ENCODE measurements at regions of chr11 and their contacts with region 1.

Region 1: GRCh38 chr11:67630228-67630942 is 648 bp upstream of the NUDT8 start:
- DNase-seq: peak; percentile 96
- H3K27ac ChIP-seq: peak overlapping the region; percentile 88
- CTCF ChIP-seq: peak; percentile 80

Region 2: GRCh38 chr11:67613960-67614715 is 16.2 kb before region 1 on chr11:
- CTCF ChIA-PET with region 1: interaction called, 15 read pairs
- POLR2A ChIA-PET with region 1: no interaction called
- DNase-seq: peak; percentile 40
- H3K27ac ChIP-seq: peak overlapping the region; percentile 72
- CTCF ChIP-seq: peak; percentile 71

Region 3: DNA sequence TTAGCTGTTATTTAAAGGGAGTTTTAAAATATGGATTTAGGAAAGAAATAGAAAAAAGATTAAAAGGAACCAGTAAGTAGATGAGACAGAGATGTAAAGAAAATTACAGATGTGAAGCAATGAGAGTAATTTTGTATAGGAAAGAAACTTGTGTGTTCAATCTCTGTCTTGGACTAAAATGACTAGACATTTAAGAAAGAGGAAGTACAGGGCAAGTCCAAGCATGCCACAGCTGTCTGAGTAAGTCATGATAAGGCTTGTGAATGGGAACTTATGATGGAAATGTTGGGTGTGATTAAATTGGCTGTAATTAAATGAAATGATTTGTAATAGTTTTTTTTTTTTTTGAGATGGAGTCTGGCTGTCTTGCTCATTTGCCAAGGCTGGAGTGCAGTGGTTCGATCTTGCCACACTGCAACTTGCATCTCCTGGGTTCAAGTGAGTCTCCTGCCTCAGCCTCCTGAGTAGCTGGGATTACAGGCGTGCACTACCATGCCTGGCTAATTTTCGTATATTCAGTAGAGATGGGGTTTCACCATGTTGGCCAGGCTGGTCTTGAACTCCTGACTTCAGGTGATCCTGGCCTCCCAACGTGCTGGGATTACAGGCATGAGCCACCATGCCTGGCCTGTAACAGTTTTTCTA is 26.0 kb after region 1 on chr11:
- CTCF ChIA-PET with region 1: interaction called, 14 read pairs
- POLR2A ChIA-PET with region 1: interaction called, 5 read pairs
- DNase-seq: peak; percentile 50
- H3K27ac ChIP-seq: peak overlapping the region; percentile 73
- CTCF ChIP-seq: no peak

Measured in RWPE1 (cell line).